Natural killer cell (primary cell): ENCODE measurements at regions of chr13 and their contacts with region 1.

Region 1: GRCh38 chr13:48436661-48437288 is 23.9 kb upstream of the LPAR6 start:
- DNase-seq: no peak
- ATAC-seq: no peak
- H3K4me3 ChIP-seq: no peak overlapping the region
- H3K4me3 Mint-ChIP-seq: no peak overlapping the region
- H3K27ac ChIP-seq: no peak overlapping the region
- H3K27ac Mint-ChIP-seq: peak overlapping the region in 1 of 2 donors; percentile 30
- H3K4me1 ChIP-seq: peaks cover 2% of the 10 kb centered on the region
- H3K4me1 Mint-ChIP-seq: peaks cover 25 to 34% of the 10 kb centered on the region in 2 donors
- H3K27me3 ChIP-seq: no peaks in the 10 kb centered on the region
- H3K27me3 Mint-ChIP-seq: no peaks in the 10 kb centered on the region
- CTCF ChIP-seq: no peak

Region 2: DNA sequence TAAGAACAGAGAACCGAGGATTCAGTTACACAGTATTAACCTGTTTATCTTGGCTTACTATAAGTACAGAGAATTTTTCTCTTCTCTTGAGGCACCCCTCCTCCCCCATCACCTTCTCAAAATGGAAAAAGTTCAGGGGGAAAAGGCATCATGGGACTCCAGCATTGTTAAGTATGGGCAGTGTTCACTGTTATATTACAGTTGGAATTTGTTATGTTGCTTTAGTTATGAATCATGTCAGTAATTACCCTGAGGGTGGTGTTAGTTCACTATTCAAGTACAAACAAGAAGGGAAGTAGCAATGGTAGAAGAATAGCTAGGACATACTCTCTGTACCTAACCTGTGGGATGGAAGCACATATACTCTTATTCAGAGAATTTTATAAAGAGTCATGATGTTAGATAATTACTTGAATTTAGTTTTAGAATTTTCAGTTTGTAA is 35.9 kb before region 1 on chr13:
- intact Hi-C with region 1: no loop called
- DNase-seq: peak in 1 of 2 donors; percentile 51
- ATAC-seq: peak; percentile 20 to 48 (median 29)
- H3K4me3 ChIP-seq: no peak overlapping the region
- H3K4me3 Mint-ChIP-seq: peak overlapping the region; percentile 63
- H3K27ac ChIP-seq: peak overlapping the region; percentile 38
- H3K27ac Mint-ChIP-seq: peak overlapping the region; percentile 69 to 79
- H3K4me1 ChIP-seq: peaks cover 21% of the 10 kb centered on the region
- H3K4me1 Mint-ChIP-seq: peaks cover 44 to 50% of the 10 kb centered on the region in 2 donors
- H3K27me3 ChIP-seq: no peaks in the 10 kb centered on the region
- H3K27me3 Mint-ChIP-seq: no peaks in the 10 kb centered on the region
- CTCF ChIP-seq: no peak

Region 3: GRCh38 chr13:48424212-48424611 is 12.6 kb before region 1 on chr13:
- intact Hi-C with region 1: loop called (anchors 1 kb)
- DNase-seq: no peak
- ATAC-seq: no peak
- H3K4me3 ChIP-seq: no peak overlapping the region
- H3K4me3 Mint-ChIP-seq: no peak overlapping the region
- H3K27ac ChIP-seq: no peak overlapping the region
- H3K27ac Mint-ChIP-seq: no peak overlapping the region
- H3K4me1 ChIP-seq: no peaks in the 10 kb centered on the region
- H3K4me1 Mint-ChIP-seq: peaks cover 13 to 19% of the 10 kb centered on the region in 2 donors
- H3K27me3 ChIP-seq: no peaks in the 10 kb centered on the region
- H3K27me3 Mint-ChIP-seq: no peaks in the 10 kb centered on the region
- CTCF ChIP-seq: no peak

Region 4: GRCh38 chr13:48511621-48512230 is 75.0 kb after region 1 on chr13:
- intact Hi-C with region 1: no loop called
- DNase-seq: no peak
- ATAC-seq: no peak
- H3K4me3 ChIP-seq: no peak overlapping the region
- H3K4me3 Mint-ChIP-seq: no peak overlapping the region
- H3K27ac ChIP-seq: no peak overlapping the region
- H3K27ac Mint-ChIP-seq: no peak overlapping the region
- H3K4me1 ChIP-seq: peaks cover 6% of the 10 kb centered on the region
- H3K4me1 Mint-ChIP-seq: peaks cover 14 to 31% of the 10 kb centered on the region in 2 donors
- H3K27me3 ChIP-seq: no peaks in the 10 kb centered on the region
- H3K27me3 Mint-ChIP-seq: no peaks in the 10 kb centered on the region
- CTCF ChIP-seq: no peak

Region 5: DNA sequence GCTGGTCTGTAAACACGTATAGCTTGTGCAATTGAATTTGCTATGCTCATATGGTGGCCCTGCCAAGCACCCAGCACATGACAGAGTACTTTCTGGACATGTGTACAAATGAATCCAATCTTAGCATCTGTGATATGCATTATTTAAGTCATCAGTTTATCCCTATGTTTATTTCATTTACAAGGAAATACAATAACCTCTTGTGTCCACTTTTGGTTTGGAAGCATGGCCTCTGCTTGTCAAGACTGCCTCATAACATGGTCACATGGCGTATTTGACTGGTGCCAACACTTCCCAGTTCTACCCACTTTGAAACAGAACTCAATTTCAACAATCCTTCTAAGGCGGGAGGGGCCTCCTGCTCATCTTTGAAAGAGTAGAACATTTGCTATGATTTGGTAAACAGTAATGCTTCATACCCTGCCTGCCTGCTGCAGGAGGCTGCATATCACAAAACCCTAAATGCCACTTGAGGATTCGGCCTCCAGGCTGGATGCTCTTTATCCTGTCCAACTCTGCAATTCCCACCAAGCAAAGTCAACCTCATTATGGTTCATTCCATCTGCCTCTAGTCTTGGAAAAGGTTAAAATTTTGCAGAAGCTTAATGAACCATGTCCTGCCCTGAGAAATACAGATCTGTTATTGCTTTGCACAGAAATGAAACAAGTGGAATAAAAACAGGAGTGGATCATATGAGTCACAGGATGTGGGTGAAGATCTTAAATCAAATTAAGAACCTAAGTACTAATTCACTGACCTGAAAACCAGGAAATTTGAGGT is 368.2 kb after region 1 on chr13:
- intact Hi-C with region 1: no loop called
- DNase-seq: peak in 1 of 2 donors; percentile 9
- ATAC-seq: no peak
- H3K4me3 ChIP-seq: no peak overlapping the region
- H3K4me3 Mint-ChIP-seq: no peak overlapping the region
- H3K27ac ChIP-seq: no peak overlapping the region
- H3K27ac Mint-ChIP-seq: no peak overlapping the region
- H3K4me1 ChIP-seq: peaks cover 3% of the 10 kb centered on the region
- H3K4me1 Mint-ChIP-seq: peaks cover 8 to 18% of the 10 kb centered on the region in 2 donors
- H3K27me3 ChIP-seq: no peaks in the 10 kb centered on the region
- H3K27me3 Mint-ChIP-seq: peaks cover 0 to 3% of the 10 kb centered on the region in 2 donors
- CTCF ChIP-seq: no peak